ENCODE measurements at regions of chr3 and their contacts with region 1.

Region 1: GRCh38 chr3:186540221-186540834 is 3.9 kb downstream of the CRYGS start:
- DNase-seq: peak; percentile 73 to 91
- H3K4me3 ChIP-seq: no peak overlapping the region
- CTCF ChIP-seq: no peak
- POLR2A ChIP-seq: no peak

Region 2: DNA sequence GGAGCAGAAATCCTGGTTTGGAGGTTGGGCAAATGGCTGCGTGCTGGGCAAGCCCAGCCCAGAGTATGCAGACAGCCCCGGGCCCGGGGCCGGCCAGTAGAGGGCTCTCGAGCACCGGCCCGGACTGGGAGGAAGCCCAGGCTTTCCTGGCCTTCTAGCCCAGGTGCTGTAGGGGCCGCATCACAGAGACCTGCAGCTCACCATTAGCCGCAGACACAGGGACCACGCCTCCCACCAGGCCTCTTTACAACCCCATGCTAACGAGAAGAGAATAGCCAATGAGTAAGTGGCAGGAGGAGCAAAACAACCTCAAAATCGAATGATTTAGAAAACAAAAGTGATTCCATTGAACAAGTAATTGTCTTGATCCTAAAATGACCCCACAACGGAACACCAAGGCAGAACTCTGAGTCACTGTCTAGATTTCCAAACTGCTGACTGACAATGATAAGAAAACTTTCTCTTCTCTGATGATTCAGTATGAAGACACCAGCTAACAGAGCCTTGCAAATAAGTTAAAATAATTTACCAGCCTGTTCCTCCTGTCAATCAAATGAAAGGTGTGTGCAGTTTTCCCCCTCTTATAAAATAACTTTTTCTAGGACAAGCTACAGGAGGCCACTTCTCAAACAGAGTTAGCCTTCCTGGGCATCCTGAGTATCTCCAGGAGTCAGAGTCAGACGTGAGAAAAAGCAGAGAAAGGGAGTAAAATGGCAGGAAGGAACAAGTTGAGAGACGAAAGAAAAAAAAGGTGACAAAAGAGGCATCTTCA is 280.5 kb before region 1 on chr3:
- intact Hi-C with region 1: loop called (anchors 10 kb)
- DNase-seq: peak; percentile 20 to 87
- H3K4me3 ChIP-seq: no peak overlapping the region
- CTCF ChIP-seq: no peak
- POLR2A ChIP-seq: no peak